ENCODE measurements at regions of chr13 and their contacts with region 1.

Region 1: DNA sequence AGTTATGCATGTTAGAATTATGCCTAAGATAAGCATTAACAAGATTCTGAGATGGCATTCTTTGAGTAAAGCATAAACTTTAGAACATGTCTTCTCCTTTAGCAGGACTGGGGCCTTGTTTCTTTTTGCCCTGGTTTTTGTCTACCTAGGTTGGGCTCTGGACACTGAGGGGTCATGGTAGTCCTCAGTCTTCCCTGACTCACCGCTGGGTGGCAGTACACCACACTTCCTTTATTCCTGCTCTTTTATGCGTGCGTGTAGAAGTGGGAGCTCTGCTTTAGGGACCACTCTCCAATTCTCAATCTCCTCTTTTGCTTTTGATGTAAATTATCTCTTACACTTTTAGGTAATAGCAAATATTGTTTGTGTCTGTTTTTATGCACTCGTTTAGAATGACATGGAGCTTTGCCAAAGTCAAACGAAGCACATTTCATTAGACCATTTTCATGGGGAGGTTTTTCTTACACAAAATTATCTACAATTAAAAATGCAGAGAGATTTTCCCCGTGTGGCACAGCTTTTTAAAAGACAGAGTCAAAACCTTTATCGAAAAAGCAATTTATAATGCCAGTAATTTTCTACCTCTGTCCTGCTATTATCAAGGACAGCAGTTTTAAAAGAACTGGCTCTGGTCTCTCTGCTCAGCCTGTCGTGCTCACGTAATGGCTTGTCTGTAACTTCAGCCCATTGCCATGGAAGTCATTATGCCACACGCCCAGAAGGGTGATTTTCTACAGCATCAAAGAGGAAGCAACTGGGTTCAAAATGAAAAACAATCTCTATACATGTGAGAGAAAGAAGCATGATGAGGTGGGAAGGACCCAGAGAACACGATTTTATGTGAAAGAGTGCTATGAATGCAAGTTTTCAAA is 413.9 kb downstream of the COG6 start:
- DNase-seq: peak; percentile 83
- H3K4me3 Mint-ChIP-seq: no peak overlapping the region
- H3K27ac Mint-ChIP-seq: peak overlapping the region; percentile 42
- H3K4me1 Mint-ChIP-seq: peaks cover 14% of the 10 kb centered on the region
- H3K27me3 Mint-ChIP-seq: no peaks in the 10 kb centered on the region
- CTCF ChIP-seq: peak; percentile 72

Region 2: DNA sequence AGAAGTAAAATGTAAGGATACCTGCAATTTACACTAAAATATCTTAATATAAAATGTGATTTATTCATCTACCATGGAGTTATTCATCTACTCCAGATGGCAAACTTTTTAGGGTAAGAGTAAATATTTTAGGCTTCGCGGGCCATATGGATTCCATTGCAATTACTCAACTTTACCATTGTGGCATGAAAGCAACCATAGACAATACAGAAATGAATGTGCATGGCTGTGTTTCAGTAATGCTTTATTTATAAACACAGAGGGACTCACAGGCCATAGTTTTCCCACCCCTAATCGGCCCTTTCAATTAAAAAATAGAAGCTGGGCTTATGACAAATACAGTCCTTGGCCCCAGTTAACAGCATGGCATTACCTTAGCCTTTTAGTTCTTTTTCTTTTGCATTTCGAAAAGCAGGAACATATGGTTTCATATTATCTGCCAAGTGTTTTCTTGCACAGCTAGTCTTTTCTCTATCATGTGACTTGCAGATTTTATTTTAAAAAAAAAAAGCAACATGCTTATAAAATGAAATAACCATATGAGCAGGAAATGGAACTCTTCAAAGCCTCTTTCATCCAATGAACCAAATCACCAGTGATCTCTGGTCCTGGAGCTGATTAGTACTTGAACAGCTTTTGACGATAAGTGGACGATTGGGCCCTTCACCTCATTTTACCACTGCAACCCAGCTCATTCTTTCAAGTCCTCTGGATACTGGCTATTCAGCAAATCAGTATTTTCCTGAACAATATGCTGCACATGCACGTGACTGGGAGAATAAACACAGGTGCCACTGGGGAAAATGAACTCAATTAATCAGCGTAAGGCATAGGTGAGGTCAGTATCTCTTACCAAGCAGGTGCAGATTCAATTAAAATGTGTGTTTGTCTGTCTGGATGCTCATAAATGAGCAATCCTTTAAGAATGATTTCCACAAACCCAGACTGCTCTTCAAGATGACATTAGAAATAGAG is 530.3 kb before region 1 on chr13:
- CTCF ChIA-PET with region 1: no interaction called
- POLR2A ChIA-PET with region 1: no interaction called
- intact Hi-C with region 1: no loop called
- DNase-seq: no peak
- H3K4me3 Mint-ChIP-seq: no peak overlapping the region
- H3K27ac Mint-ChIP-seq: no peak overlapping the region
- H3K4me1 Mint-ChIP-seq: no peaks in the 10 kb centered on the region
- H3K27me3 Mint-ChIP-seq: no peaks in the 10 kb centered on the region
- CTCF ChIP-seq: no peak

Region 3: DNA sequence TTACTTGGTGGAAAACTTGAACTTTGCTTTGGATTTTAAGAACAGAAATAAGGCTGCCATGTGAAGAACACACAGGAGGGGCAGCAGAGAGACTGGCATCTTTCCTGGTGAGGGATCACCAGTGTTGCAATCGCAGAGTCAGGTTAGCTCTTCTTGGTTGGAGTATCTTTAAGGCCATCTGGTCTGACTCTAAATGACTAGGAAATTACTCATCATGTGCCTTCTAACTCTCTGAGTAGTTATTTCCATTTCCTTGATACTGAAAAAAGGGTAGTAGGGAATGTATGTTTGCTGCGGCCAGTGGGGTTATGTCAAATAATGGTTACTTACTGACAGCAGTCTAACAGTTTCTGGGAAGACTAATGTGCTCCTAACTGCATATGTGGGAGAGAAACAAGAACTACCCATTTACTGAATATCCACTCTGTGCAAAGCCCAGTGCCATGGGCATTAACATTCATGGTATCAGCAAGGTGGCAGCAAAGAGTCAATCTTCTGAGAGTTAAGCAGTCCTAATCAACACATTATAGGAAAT is 291.8 kb before region 1 on chr13:
- CTCF ChIA-PET with region 1: interaction called, 4 read pairs
- POLR2A ChIA-PET with region 1: interaction called, 3 read pairs
- intact Hi-C with region 1: loop called (anchors 10 kb)
- DNase-seq: peak; percentile 90
- H3K4me3 Mint-ChIP-seq: no peak overlapping the region
- H3K27ac Mint-ChIP-seq: peak overlapping the region; percentile 31
- H3K4me1 Mint-ChIP-seq: peaks cover 10% of the 10 kb centered on the region
- H3K27me3 Mint-ChIP-seq: no peaks in the 10 kb centered on the region
- CTCF ChIP-seq: peak; percentile 23

Region 4: GRCh38 chr13:40012190-40012589 is 57.2 kb before region 1 on chr13:
- CTCF ChIA-PET with region 1: no interaction called
- POLR2A ChIA-PET with region 1: no interaction called
- intact Hi-C with region 1: no loop called
- DNase-seq: no peak
- H3K4me3 Mint-ChIP-seq: no peak overlapping the region
- H3K27ac Mint-ChIP-seq: no peak overlapping the region
- H3K4me1 Mint-ChIP-seq: peaks cover 13% of the 10 kb centered on the region
- H3K27me3 Mint-ChIP-seq: no peaks in the 10 kb centered on the region
- CTCF ChIP-seq: no peak

Region 5: GRCh38 chr13:40149611-40150274 is 80.3 kb after region 1 on chr13:
- CTCF ChIA-PET with region 1: interaction called, 5 read pairs
- POLR2A ChIA-PET with region 1: interaction called, 6 read pairs
- intact Hi-C with region 1: loop called (anchors 5 kb)
- DNase-seq: peak; percentile 90
- H3K4me3 Mint-ChIP-seq: no peak overlapping the region
- H3K27ac Mint-ChIP-seq: peak overlapping the region; percentile 94
- H3K4me1 Mint-ChIP-seq: peaks cover 50% of the 10 kb centered on the region
- H3K27me3 Mint-ChIP-seq: no peaks in the 10 kb centered on the region
- CTCF ChIP-seq: no peak

Region 6: GRCh38 chr13:40344270-40345148 is 275.1 kb after region 1 on chr13:
- CTCF ChIA-PET with region 1: interaction called, 6 read pairs
- POLR2A ChIA-PET with region 1: no interaction called
- intact Hi-C with region 1: loop called (anchors 10 kb)
- DNase-seq: no peak
- H3K4me3 Mint-ChIP-seq: no peak overlapping the region
- H3K27ac Mint-ChIP-seq: no peak overlapping the region
- H3K4me1 Mint-ChIP-seq: peaks cover 29% of the 10 kb centered on the region
- H3K27me3 Mint-ChIP-seq: no peaks in the 10 kb centered on the region
- CTCF ChIP-seq: no peak

Region 7: GRCh38 chr13:40682449-40683240 is 613.2 kb after region 1 on chr13:
- CTCF ChIA-PET with region 1: interaction called, 3 read pairs
- POLR2A ChIA-PET with region 1: no interaction called
- intact Hi-C with region 1: loop called (anchors 5 kb)
- DNase-seq: peak; percentile 25
- H3K4me3 Mint-ChIP-seq: no peak overlapping the region
- H3K27ac Mint-ChIP-seq: peak overlapping the region; percentile 13
- H3K4me1 Mint-ChIP-seq: peaks cover 14% of the 10 kb centered on the region
- H3K27me3 Mint-ChIP-seq: no peaks in the 10 kb centered on the region
- CTCF ChIP-seq: peak; percentile 49